ENCODE measurements at regions of chr12 and their contacts with region 1.

Region 1: GRCh38 chr12:113196996-113197395 is 11.5 kb downstream of the RITA1 start:
- DNase-seq: peak; percentile 71
- ATAC-seq: peak; percentile 86

Region 2: DNA sequence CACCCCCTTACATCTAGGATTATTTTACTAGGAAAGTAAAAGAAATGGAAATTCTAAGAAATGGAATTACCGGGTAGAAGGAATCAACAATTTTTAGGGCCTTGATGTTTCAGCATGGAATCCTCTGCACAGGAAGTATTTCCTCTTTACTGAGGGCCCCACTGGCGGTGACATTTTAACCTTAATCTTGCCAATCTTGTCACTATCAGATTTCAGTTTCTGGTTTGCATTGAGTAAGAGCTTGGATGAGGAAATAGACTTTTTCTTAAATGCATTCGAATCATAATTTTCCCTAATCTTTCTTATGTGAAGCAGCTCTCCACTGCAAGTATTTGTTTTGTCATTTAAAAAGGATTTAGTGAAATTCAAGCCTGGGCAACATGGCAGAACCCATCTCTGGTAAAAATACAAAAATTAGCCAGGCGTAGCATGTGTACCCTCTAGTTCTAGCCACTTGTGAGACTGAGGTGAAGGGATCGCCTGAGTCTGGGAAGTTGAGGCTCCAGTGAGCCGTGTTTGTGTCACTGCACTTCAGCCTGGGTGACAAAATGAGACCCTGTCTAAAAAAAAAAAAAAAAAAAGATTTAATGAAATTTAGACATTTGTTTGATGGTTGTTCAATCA is 65.0 kb after region 1 on chr12:
- intact Hi-C with region 1: loop called (anchors 5 kb)
- DNase-seq: no peak
- ATAC-seq: no peak